Ascending aorta (tissue), 2 donors: ENCODE measurements at regions of chr7 and their contacts with region 1.

Region 1: DNA sequence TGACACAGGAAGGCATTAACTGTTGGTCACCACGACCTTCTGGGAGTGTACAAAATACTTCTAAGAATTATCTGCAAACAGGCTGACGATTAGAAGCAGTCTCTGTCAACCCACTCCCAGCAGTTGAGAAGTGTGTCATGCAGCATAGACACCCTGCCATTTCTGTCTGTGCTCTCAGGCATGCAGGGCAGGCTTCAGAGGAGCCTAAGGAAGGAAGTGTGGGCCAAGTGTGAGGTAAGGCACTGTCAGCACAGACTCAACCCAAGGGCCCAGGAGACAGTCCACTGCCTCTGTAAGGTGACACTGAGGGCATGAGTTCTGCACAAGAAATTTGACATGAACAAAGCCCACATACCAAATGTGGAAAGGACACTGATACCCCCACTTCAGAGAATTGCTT is 109.0 kb upstream of the VIPR2 start:
- DNase-seq: no peak
- H3K4me3 ChIP-seq: no peak overlapping the region
- H3K27ac ChIP-seq: no peak overlapping the region
- H3K4me1 ChIP-seq: no peaks in the 10 kb centered on the region
- H3K27me3 ChIP-seq: no peaks in the 10 kb centered on the region
- CTCF ChIP-seq: no peak

Region 2: GRCh38 chr7:159269745-159270144 is 16.1 kb after region 1 on chr7:
- intact Hi-C with region 1: loop called (anchors 1 kb)
- DNase-seq: no peak
- H3K4me3 ChIP-seq: no peak overlapping the region
- H3K27ac ChIP-seq: no peak overlapping the region
- H3K4me1 ChIP-seq: no peaks in the 10 kb centered on the region
- H3K27me3 ChIP-seq: no peaks in the 10 kb centered on the region
- CTCF ChIP-seq: no peak